Right ventricle myocardium inferior (tissue), 1 donor: ENCODE measurements at regions of chr3 and their contacts with region 1.

Region 1: DNA sequence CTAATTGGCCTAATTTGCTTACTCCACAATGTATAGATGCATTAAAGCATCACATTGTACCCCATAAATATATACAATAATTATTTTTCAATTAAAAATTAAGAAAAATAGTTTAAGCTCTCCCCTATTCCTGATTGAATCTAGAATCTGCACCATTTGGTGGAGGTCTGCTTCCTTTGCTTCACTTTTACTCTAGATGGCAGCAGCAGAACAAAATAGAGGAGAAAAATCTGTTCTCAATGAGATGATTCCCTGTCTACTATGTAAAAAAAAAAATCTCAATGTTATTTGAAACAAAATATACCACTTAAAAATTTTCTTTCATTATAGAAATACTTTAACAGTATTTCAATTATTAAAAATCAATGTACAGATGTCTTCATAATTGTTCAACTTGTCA is 109.6 kb upstream of the FXR1 start:
- DNase-seq: no peak
- ATAC-seq: no peak

Region 2: DNA sequence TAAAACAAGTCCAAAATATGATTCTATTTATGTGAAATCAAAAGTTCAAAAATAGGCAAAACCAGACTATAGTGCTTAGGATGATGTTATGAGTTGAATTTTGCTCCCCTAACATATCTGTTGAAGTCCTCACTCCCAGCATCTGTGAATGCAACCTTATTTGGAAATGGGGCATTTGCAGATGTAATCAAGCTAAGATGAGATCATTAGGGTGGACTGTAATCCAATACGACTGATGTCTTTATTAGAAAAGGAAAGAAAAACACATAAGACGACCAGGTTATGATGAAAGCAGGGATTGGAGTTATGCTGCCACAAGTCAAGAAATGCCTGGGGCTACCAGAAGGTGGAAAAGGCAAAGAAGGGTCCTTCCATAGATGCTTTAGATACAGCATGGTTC is 13.1 kb before region 1 on chr3:
- intact Hi-C with region 1: no loop called
- DNase-seq: no peak
- ATAC-seq: no peak

Region 3: DNA sequence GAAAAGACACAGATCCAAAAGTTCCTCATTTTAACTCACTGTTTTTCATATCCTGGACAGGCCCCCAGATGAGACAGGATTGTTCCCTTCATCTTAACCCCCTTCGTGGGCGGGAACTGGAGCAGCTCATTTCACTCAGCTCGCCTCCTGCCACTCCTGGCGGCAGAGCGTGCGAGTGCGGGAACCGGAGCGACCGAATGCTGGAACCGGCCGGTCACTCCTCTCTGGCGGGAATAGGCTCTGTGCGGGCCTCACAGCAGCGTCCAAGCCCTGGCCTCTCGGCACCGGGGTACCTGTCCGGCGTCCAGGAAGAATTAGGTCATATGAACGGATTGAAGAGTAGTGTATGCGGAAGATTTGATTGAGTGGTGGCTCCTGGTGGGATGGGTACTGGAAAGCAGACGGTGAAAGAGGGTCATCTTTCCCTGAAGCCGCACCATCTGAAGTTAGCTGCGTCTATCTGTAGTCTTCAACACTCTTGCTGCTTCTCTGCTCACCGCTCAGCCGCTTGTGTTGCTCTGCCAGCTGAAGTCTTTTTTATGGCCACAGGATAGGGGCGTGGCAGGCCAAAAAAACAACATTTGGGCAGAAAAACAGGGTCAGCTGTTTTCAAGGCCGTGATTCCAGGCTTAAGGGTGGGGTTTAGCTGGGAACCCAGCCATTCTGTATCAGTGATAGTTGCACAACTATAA is 67.3 kb after region 1 on chr3:
- intact Hi-C with region 1: loop called (anchors 5 kb)
- DNase-seq: peak; percentile 70
- ATAC-seq: peak; percentile 78

Region 4: GRCh38 chr3:180973543-180973942 is 170.7 kb after region 1 on chr3:
- intact Hi-C with region 1: loop called (anchors 10 kb)
- DNase-seq: no peak
- ATAC-seq: no peak

Region 5: DNA sequence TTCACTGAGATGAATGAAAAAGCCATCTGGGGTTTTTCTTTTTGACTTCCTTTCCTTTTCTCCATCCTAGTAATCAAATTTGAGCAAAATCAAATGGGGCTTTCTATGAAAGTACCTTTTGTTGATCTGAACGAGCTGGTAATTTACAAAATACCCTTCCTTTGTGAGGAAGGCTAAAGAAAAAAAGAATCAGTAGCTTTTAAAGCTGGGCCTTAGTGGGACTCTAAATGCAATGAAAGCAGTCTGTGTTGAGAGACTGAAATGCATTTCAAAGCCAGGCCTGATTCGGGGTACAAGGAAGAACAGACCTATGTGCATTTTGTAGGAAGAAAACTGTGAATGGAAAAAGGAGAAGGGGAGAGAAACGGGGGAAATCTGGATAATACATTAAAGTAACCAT is 372.0 kb after region 1 on chr3:
- intact Hi-C with region 1: loop called (anchors 2 kb)
- DNase-seq: no peak
- ATAC-seq: no peak